Mammary epithelial cell (primary cell): ENCODE measurements at regions of chr19 and their contacts with region 1.

Region 1: GRCh38 chr19:17470068-17470841 is at the start of gene SLC27A1:
- DNase-seq: peak; percentile 99
- H3K4me3 ChIP-seq: peak within 1 kb of the TSS; percentile 75 to 85 (median 84)
- H3K27ac ChIP-seq: peak within 1 kb of the TSS; percentile 83
- H3K4me1 ChIP-seq: peaks cover 16% of the 10 kb centered on the region
- H3K27me3 ChIP-seq: no peaks in the 10 kb centered on the region
- CTCF ChIP-seq: no peak
- total RNA-seq, gene SLC27A1: 42.2 to 90.4 TPM

Region 2: GRCh38 chr19:17205237-17206140 is 264.8 kb before region 1 on chr19:
- CTCF ChIA-PET with region 1: interaction called, 20 read pairs
- dilution Hi-C with region 1: no loop called
- in situ Hi-C with region 1: no loop called
- intact Hi-C with region 1: no loop called
- DNase-seq: peak; percentile 23
- H3K4me3 ChIP-seq: no peak overlapping the region
- H3K27ac ChIP-seq: no peak overlapping the region
- H3K4me1 ChIP-seq: peaks cover 4% of the 10 kb centered on the region
- H3K27me3 ChIP-seq: no peaks in the 10 kb centered on the region
- CTCF ChIP-seq: peak; percentile 60 to 73

Region 3: DNA sequence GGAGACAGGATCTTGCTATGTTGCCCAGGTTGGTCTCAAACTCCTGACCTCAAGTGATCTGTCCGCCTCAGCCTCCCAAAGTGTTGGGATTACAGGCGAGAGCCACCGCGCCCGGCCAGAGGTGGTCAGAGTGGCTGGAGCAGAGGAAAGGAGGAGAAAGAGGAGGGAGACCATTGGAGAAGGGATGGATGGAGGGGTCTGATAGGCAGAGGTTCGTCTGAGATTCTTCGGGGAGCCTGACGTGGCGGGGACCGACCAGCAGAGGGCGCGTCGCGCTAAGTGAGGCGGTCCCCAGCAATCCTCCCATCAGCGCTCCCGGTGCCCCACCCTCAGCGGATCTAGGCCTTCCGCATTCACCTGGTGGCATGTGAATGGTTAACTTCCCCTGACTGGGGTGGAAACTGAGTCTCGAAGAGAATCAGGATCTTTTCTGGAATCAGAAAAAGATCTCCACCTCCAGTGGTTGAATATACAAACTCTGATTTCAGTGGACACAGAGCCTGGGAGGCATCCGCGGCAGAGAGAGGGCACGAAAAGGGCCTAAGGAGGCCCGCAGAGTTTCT is 124.1 kb before region 1 on chr19:
- CTCF ChIA-PET with region 1: no interaction called
- dilution Hi-C with region 1: no loop called
- in situ Hi-C with region 1: no loop called
- intact Hi-C with region 1: loop called (anchors 1 kb)
- DNase-seq: peak; percentile 51
- H3K4me3 ChIP-seq: no peak overlapping the region
- H3K27ac ChIP-seq: no peak overlapping the region
- H3K4me1 ChIP-seq: peaks cover 7% of the 10 kb centered on the region
- H3K27me3 ChIP-seq: no peaks in the 10 kb centered on the region
- CTCF ChIP-seq: peak; percentile 78 to 94

Region 4: DNA sequence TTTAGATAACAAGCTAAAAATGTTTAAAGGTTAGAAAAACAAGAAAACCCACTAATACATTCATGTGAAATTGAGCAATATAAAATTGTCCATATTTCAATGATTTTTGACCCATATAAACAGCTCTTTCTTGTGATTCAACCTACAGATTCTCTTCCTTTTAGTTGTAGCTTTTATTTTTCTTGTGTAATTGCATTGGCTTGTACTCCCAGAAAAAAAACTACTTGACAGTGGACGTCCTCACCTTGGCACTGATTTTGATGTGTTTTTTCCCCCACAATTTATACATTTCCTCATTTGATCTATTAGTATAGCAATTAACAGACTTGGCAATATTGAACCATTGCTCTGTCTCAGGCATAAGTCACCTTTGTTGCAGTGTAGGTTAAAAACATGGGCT is 81.0 kb before region 1 on chr19:
- CTCF ChIA-PET with region 1: no interaction called
- dilution Hi-C with region 1: no loop called
- in situ Hi-C with region 1: no loop called
- intact Hi-C with region 1: no loop called
- DNase-seq: no peak
- H3K4me3 ChIP-seq: no peak overlapping the region
- H3K27ac ChIP-seq: no peak overlapping the region
- H3K4me1 ChIP-seq: peaks cover 15% of the 10 kb centered on the region
- H3K27me3 ChIP-seq: no peaks in the 10 kb centered on the region
- CTCF ChIP-seq: no peak

Region 5: GRCh38 chr19:17419621-17420466 is 50.4 kb before region 1 on chr19 and contains the start of gene MVB12A:
- CTCF ChIA-PET with region 1: no interaction called
- dilution Hi-C with region 1: no loop called
- in situ Hi-C with region 1: no loop called
- intact Hi-C with region 1: loop called (anchors 2 kb)
- DNase-seq: peak; percentile 98
- H3K4me3 ChIP-seq: peak within 1 kb of the TSS; percentile 54 to 70 (median 55)
- H3K27ac ChIP-seq: peak within 1 kb of the TSS; percentile 35
- H3K4me1 ChIP-seq: peaks cover 6% of the 10 kb centered on the region
- H3K27me3 ChIP-seq: no peaks in the 10 kb centered on the region
- CTCF ChIP-seq: no peak
- total RNA-seq, gene MVB12A: 32.2 to 50.1 TPM

Region 6: DNA sequence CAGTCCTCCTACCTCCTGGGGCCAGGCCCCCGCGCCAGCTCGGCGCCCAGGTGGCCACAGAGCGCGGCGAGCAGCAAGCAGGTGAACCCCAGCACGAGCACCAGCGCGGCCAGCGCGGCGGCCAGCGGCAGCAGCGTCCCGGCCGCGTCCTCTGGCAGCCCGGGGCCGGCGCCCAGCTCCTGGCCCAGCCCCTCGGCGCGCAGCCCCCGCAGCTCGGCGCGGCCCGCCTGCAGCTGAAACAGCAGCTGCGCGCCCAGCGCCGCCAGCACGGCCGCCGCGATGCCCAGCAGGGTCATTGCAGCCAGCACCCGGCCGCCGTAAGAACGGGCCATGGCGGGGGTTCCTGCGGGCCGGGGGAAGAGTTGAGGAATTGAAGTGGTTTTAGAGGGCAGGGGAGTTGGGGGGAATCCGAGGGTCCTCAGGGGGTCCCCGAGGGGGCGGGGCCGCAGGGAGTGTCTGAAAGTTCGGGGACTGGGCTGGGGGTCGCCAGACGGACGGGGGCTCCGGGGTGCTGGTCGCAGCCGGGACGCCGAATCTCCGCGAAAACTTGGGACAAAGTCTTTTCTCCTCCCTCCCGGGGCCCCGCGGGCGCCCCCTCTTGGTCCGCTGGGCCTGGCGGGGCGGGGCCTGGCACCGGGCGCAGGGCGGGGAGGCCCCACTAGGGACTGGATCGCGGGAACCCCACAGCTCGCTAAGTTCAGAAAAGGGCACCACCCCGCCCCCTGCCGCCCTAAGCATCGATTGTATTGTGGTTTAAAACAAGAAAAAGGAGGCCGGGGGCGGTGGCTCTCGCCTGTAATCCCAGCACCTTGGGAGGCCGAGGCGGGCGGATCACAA is 21.9 kb before region 1 on chr19 and contains the start of gene TMEM221:
- CTCF ChIA-PET with region 1: interaction called, 6 read pairs
- dilution Hi-C with region 1: no loop called
- in situ Hi-C with region 1: no loop called
- intact Hi-C with region 1: loop called (anchors 1 kb)
- DNase-seq: no peak
- H3K4me3 ChIP-seq: peak within 1 kb of the TSS; percentile 37 to 46 (median 43)
- H3K27ac ChIP-seq: no peak within 1 kb of the TSS
- H3K4me1 ChIP-seq: peaks cover 8% of the 10 kb centered on the region
- H3K27me3 ChIP-seq: no peaks in the 10 kb centered on the region
- CTCF ChIP-seq: peak in 1 of 2 donors; percentile 58
- total RNA-seq, gene TMEM221: 0.17 to 1.4 TPM

Region 7: DNA sequence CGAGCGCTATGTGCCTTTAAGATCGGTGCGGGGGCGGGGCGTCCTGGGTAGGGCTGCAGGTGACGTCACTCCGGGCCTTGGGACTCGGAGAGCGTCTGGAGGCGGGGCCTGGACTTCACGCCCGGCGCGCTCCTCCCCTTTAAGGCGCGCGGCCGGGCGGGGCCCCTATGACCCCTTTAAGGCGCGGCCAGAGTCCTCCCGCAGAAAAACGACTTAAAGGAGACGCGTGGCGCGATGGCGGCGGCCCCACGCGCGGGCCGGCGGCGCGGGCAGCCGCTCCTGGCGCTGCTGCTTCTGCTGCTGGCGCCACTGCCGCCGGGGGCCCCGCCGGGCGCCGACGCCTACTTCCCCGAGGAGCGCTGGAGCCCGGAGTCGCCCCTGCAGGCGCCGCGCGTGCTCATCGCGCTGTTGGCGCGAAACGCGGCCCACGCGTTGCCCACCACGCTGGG is 85.2 kb after region 1 on chr19 and contains the start of gene COLGALT1:
- CTCF ChIA-PET with region 1: no interaction called
- dilution Hi-C with region 1: no loop called
- in situ Hi-C with region 1: no loop called
- intact Hi-C with region 1: loop called (anchors 1 kb)
- DNase-seq: peak; percentile 92
- H3K4me3 ChIP-seq: peak within 1 kb of the TSS; percentile 60 to 99 (median 95)
- H3K27ac ChIP-seq: peak within 1 kb of the TSS; percentile 60
- H3K4me1 ChIP-seq: peaks cover 9% of the 10 kb centered on the region
- H3K27me3 ChIP-seq: no peaks in the 10 kb centered on the region
- CTCF ChIP-seq: no peak
- total RNA-seq, gene COLGALT1: 74.2 to 92.5 TPM

Region 8: GRCh38 chr19:17807731-17808316 is 337.6 kb after region 1 on chr19:
- CTCF ChIA-PET with region 1: no interaction called
- dilution Hi-C with region 1: no loop called
- in situ Hi-C with region 1: no loop called
- intact Hi-C with region 1: no loop called
- DNase-seq: no peak
- H3K4me3 ChIP-seq: no peak overlapping the region
- H3K27ac ChIP-seq: no peak overlapping the region
- H3K4me1 ChIP-seq: no peaks in the 10 kb centered on the region
- H3K27me3 ChIP-seq: no peaks in the 10 kb centered on the region
- CTCF ChIP-seq: no peak